Right ventricle myocardium superior (tissue), 1 donor: ENCODE measurements at regions of chr5 and their contacts with region 1.

Region 1: GRCh38 chr5:80093796-80094195 is 58.6 kb downstream of the THBS4 start:
- DNase-seq: no peak
- ATAC-seq: no peak

Region 2: GRCh38 chr5:80041527-80041926 is 52.3 kb before region 1 on chr5:
- intact Hi-C with region 1: no loop called
- DNase-seq: no peak
- ATAC-seq: no peak

Region 3: DNA sequence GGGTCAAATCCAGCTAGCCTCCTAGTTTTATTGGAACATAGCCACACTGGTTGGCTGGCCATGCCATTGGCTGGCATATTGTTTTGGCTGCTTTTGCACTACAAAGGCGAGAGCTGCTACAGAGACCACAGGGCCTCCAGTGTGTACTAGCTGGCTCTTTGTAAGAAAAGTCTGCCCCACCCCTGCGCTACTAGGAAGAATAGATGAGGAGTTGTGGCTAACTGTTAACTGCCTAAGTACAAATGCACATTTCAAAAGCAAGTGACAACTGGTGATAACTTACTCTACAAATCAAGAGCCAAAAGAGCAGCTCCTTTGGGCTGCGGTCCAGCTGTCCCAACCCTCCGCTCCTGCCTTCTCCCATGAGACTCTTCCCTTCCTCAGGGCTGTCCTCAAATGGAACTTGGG is 98.2 kb after region 1 on chr5:
- intact Hi-C with region 1: no loop called
- DNase-seq: peak; percentile 73
- ATAC-seq: peak; percentile 68

Region 4: GRCh38 chr5:80275347-80275746 is 181.6 kb after region 1 on chr5:
- intact Hi-C with region 1: loop called (anchors 10 kb)
- DNase-seq: no peak
- ATAC-seq: peak; percentile 68

Region 5: DNA sequence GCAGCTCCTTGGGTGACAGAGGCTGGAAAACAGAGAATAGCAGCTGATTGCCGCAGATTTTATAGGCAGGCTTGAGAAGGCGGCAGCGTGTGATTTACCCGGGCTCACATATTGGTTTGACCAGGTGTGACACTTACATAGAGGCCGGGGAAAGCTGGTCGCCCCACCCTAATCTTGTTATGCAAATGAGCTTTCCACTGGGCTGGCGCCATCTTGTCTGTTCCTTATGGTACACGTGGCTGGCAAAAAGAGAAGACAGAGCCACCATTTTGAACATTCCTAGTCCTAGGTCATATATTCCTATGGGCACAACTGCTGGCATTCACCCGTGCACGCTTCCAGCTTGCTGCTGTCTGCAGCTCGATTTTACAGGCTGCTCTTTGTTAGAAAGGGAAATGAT is 214.7 kb after region 1 on chr5:
- intact Hi-C with region 1: loop called (anchors 5 kb)
- DNase-seq: no peak
- ATAC-seq: no peak

Region 6: GRCh38 chr5:80407735-80408482 is 314.1 kb after region 1 on chr5 and contains the start of gene ZFYVE16:
- intact Hi-C with region 1: loop called (anchors 10 kb)
- DNase-seq: peak; percentile 100
- ATAC-seq: peak; percentile 98
- total RNA-seq, gene ZFYVE16: 29.6 TPM